Endothelial cell of umbilical vein (primary cell): ENCODE measurements at regions of chr2 and their contacts with region 1.

Region 1: GRCh38 chr2:219206442-219207253 is at the start of gene ZFAND2B:
- DNase-seq: peak; percentile 94
- H3K4me3 ChIP-seq: peak within 1 kb of the TSS; percentile 36 to 83 (median 73)
- H3K27ac ChIP-seq: peak within 1 kb of the TSS; percentile 26
- H3K4me1 ChIP-seq: peaks cover 18% of the 10 kb centered on the region
- H3K27me3 ChIP-seq: no peaks in the 10 kb centered on the region
- CTCF ChIP-seq: no peak
- POLR2A ChIP-seq: peak; percentile 99
- total RNA-seq, gene ZFAND2B: 23.3 and 24.0 TPM in 2 replicates

Region 2: DNA sequence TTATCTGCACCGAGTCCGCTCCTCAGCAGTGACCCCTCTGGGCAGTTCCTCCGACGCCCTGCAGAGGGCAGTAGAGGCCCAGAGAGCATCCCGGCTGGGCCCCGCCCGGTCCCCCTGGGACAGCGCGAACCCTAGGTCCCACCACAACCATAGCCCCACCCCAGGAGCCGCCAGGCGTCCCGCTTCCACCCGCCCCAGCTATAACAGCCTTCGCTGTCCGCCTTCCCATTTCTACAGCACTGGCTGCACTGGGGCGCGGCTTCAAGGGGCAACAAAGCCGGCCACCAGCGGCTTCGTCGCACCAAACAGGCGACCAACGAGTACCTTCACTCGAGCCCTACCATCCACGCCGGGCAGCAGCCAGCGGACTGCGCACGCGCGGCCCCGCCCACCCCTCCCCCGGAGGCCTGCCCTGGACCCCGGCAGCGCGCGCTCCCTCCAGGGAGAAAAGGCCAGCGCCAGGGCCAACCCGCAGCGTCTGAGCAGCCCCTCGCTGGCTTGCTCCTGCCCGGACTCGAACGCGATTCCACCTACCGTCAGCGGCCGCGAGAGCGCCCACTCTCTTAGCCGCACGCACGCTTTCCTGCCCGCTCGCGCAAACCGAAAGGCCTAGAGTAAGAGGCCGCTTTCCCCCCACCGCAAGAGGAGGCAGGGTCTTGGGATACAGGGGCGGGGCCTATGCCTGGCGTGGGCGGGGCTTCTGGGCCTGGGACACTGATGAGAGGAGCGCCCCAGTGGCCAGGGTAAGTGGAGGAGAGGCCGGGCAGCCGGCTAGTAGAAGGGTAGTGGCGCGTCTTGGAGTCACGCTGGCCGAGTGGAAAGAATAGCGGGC is 46.2 kb before region 1 on chr2 and contains the start of gene NHEJ1:
- CTCF ChIA-PET with region 1: interaction called, 24 read pairs
- POLR2A ChIA-PET with region 1: interaction called, 3 read pairs
- dilution Hi-C with region 1: no loop called
- intact Hi-C with region 1: loop called (anchors 1 kb)
- DNase-seq: peak; percentile 96
- H3K4me3 ChIP-seq: peak within 1 kb of the TSS; percentile 24 to 89 (median 41)
- H3K27ac ChIP-seq: no peak within 1 kb of the TSS
- H3K4me1 ChIP-seq: peaks cover 10% of the 10 kb centered on the region
- H3K27me3 ChIP-seq: no peaks in the 10 kb centered on the region
- CTCF ChIP-seq: peak; percentile 96 to 99
- POLR2A ChIP-seq: peak; percentile 76
- total RNA-seq, gene NHEJ1: 12.1 and 12.9 TPM in 2 replicates

Region 3: DNA sequence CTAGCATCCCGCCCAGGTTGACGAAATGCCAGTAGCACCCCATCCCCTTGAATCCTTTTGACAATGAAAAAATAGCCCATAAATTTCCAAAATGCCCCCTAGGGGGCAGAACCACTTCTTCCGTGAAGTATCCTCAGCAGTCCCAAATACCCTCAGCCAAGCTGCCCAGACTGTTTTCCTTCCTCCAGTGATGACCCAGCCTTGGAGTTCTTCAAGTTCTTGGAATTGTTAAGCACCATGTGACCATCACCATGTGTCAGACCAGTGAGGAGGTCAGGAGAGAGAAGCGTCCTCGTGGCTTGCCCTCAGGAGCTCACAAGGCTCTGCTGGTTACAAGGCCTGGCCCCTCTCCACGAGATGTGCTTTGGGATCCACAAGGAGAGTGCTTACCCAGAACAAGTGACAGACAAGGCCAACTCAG is 35.4 kb before region 1 on chr2:
- CTCF ChIA-PET with region 1: interaction called, 28 read pairs
- POLR2A ChIA-PET with region 1: interaction called, 4 read pairs
- dilution Hi-C with region 1: no loop called
- intact Hi-C with region 1: loop called (anchors 1 kb)
- DNase-seq: peak; percentile 76
- H3K4me3 ChIP-seq: no peak overlapping the region
- H3K27ac ChIP-seq: no peak overlapping the region
- H3K4me1 ChIP-seq: no peaks in the 10 kb centered on the region
- H3K27me3 ChIP-seq: no peaks in the 10 kb centered on the region
- CTCF ChIP-seq: peak; percentile 69 to 83
- POLR2A ChIP-seq: no peak

Region 4: DNA sequence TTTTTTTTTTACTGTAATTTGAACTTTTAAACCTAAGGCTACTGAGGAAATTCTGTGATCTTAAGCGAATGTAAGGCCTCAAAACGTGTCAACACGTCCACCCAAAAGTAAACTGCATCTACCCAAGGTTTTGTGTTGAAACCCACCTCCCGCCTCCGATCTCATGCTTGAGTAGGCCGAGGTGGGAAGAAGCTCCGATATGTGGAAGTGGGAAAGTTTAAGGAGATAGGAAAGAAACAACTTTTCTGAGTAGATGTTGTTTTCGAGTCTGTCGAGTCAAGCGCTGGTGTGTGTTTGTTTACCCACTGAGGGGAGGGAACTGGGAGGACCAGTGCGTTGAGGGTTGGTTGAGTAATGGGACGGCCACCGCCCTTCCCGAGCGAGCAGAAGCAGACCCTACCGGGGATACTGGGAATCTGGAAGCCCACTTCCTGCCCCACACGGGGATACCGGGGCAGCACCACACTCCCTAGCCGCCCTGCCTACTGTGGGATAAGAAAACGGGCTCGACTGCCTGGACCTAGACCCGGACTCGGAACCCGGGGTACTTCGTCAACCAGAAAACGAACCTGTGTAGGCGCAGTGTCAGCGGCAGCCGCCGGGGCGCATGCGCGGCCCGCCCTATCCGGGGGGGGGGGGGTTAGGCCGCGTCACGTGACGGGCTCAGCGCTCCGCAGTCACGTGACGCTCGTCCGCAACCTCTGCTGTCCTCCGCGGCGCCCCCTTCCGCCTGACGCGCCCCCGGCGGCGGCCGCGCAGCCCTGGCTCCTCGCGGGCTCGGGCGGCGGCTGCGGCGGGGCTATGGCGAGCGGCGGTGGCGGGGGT is 28.9 kb before region 1 on chr2 and contains the start of gene RETREG2:
- CTCF ChIA-PET with region 1: interaction called, 14 read pairs
- POLR2A ChIA-PET with region 1: interaction called, 4 read pairs
- dilution Hi-C with region 1: no loop called
- intact Hi-C with region 1: loop called (anchors 1 kb)
- DNase-seq: peak; percentile 93
- H3K4me3 ChIP-seq: peak within 1 kb of the TSS; percentile 44 to 81 (median 67)
- H3K27ac ChIP-seq: peak within 1 kb of the TSS; percentile 62
- H3K4me1 ChIP-seq: peaks cover 18% of the 10 kb centered on the region
- H3K27me3 ChIP-seq: no peaks in the 10 kb centered on the region
- CTCF ChIP-seq: peak in 1 of 2 donors; percentile 25
- POLR2A ChIP-seq: peak; percentile 97
- total RNA-seq, gene RETREG2: 58.2 and 59.5 TPM in 2 replicates

Region 5: DNA sequence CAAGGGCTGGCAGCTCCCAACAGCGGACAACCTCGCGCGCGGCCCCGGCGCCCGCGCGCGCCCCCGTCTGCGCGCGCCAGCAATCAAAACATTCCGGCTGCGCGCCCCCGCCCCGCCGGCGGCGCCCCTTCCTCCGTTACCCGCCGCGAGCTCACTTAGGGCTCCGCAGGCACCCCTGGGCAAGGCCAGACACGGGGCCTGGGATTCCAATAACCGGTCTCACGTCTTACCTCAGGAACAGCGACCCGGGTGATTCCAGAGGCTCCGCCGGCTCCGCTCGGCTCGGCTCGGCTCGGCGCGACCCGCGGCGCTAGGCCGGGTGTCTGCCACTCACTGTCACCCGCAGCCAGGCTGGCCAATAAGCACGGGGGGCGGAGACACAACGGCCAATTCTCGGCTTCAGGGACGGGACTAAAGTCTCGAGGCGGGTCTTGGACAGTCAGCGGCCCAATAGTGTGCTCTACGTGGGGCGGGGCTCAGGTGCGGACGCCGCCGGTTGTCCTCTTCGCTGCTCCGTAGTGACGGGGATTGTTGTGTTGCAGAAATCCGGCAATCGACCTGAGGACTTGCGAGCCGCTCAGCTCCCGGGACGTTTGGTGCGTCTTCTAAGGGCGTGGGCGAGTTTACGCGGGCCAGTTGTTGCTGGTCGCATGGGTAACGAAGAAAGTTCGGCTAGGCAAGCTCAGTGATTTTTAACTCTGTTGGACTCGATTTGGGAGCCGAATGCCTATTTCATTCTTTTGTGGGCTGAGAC is 22.8 kb after region 1 on chr2 and contains the starts of genes ANKZF1 and ATG9A:
- CTCF ChIA-PET with region 1: interaction called, 5 read pairs
- POLR2A ChIA-PET with region 1: no interaction called
- dilution Hi-C with region 1: no loop called
- intact Hi-C with region 1: loop called (anchors 1 kb)
- DNase-seq: peak; percentile 100
- H3K4me3 ChIP-seq: peak within 1 kb of the TSS; percentile 70 to 76 (median 70)
- H3K27ac ChIP-seq: peak within 1 kb of the TSS; percentile 76
- H3K4me1 ChIP-seq: peaks cover 15% of the 10 kb centered on the region
- H3K27me3 ChIP-seq: no peaks in the 10 kb centered on the region
- CTCF ChIP-seq: no peak
- POLR2A ChIP-seq: peak; percentile 85
- total RNA-seq, gene ANKZF1: 34.0 and 36.2 TPM in 2 replicates
- total RNA-seq, gene ATG9A: 62.2 and 65.5 TPM in 2 replicates

Region 6: DNA sequence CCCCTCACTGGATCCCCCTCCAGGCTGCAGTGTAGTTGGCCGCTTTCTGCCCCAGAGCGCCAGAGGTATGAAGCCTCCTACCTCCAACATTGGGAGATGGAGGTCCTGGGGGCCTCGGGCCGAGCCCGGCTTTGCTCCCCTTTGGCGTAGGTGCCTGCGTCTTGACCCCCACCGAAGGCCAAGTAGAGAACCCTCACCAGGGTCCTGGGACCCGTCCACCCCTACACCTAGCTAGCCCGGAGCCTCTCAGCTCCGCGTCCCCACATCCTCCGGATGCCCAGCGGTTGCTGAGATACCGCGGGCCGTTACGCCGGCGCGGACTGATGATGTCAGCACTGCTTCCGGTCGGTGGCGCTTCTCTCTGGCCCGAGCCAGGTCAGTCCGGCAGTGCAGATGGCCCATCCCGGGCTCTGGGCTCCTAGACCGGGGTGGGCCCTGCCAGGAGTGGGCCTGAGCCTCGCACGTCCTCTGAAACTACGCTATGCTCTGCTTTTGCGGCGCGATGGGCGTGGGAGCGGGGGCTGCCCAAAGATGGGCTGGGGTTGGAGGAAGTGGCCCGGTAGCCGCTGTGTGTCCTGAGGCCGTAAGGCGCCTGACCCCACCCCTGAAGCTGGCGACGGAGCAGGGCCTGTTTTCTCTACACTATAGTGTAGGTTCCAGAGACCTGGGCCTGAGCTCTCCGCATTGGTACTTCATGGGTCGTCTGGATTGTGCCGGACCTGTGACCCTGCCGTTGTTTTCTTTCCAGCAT is 38.7 kb after region 1 on chr2 and contains the starts of genes GLB1L and STK16:
- CTCF ChIA-PET with region 1: interaction called, 3 read pairs
- POLR2A ChIA-PET with region 1: interaction called, 5 read pairs
- dilution Hi-C with region 1: no loop called
- intact Hi-C with region 1: loop called (anchors 2 kb)
- DNase-seq: peak; percentile 91
- H3K4me3 ChIP-seq: peak within 1 kb of the TSS; percentile 67 to 80 (median 67)
- H3K27ac ChIP-seq: peak within 1 kb of the TSS; percentile 92
- H3K4me1 ChIP-seq: peaks cover 28% of the 10 kb centered on the region
- H3K27me3 ChIP-seq: no peaks in the 10 kb centered on the region
- CTCF ChIP-seq: no peak
- POLR2A ChIP-seq: peak; percentile 93
- total RNA-seq, gene GLB1L: 9.2 and 9.5 TPM in 2 replicates
- total RNA-seq, gene STK16: 18.8 and 21.1 TPM in 2 replicates

Region 7: GRCh38 chr2:219388127-219388844 is 181.6 kb after region 1 on chr2:
- CTCF ChIA-PET with region 1: no interaction called
- POLR2A ChIA-PET with region 1: no interaction called
- dilution Hi-C with region 1: no loop called
- intact Hi-C with region 1: loop called (anchors 2 kb)
- DNase-seq: peak; percentile 96
- H3K4me3 ChIP-seq: peak overlapping the region in 2 of 3 experiments; percentile 46 to 55
- H3K27ac ChIP-seq: no peak overlapping the region
- H3K4me1 ChIP-seq: peaks cover 9% of the 10 kb centered on the region
- H3K27me3 ChIP-seq: peaks cover 2% of the 10 kb centered on the region in 2 experiments
- CTCF ChIP-seq: peak; percentile 47 to 56
- POLR2A ChIP-seq: no peak

Region 8: DNA sequence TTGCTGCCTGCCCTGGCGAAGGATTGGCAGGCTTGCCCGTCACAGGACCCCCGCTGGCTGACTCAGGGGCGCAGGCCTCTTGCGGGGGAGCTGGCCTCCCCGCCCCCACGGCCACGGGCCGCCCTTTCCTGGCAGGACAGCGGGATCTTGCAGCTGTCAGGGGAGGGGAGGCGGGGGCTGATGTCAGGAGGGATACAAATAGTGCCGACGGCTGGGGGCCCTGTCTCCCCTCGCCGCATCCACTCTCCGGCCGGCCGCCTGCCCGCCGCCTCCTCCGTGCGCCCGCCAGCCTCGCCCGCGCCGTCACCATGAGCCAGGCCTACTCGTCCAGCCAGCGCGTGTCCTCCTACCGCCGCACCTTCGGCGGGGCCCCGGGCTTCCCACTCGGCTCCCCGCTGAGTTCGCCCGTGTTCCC is 211.5 kb after region 1 on chr2 and contains the start of gene DES:
- CTCF ChIA-PET with region 1: no interaction called
- POLR2A ChIA-PET with region 1: no interaction called
- dilution Hi-C with region 1: no loop called
- intact Hi-C with region 1: no loop called
- DNase-seq: no peak
- H3K4me3 ChIP-seq: no peak within 1 kb of the TSS
- H3K27ac ChIP-seq: no peak within 1 kb of the TSS
- H3K4me1 ChIP-seq: no peaks in the 10 kb centered on the region
- H3K27me3 ChIP-seq: peaks cover 26 to 30% of the 10 kb centered on the region in 2 experiments
- CTCF ChIP-seq: no peak
- POLR2A ChIP-seq: no peak
- total RNA-seq, gene DES: not detected in 2 replicates